Activated B cell treated with CpG ODN at 0.5 μM for 24 hours (primary cell): ENCODE measurements at regions of chr2 and their contacts with region 1.

Region 1: GRCh38 chr2:54673501-54673998 is 49.9 kb upstream of the EML6 start:
- DNase-seq: no peak
- ATAC-seq: peak; percentile 56
- H3K4me3 Mint-ChIP-seq: peak overlapping the region; percentile 64
- H3K27ac Mint-ChIP-seq: peak overlapping the region; percentile 84
- H3K4me1 Mint-ChIP-seq: peaks cover 34% of the 10 kb centered on the region
- H3K27me3 Mint-ChIP-seq: no peaks in the 10 kb centered on the region
- CTCF ChIP-seq: no peak

Region 2: GRCh38 chr2:54691445-54692135 is 18.0 kb after region 1 on chr2:
- CTCF ChIA-PET with region 1: no interaction called
- POLR2A ChIA-PET with region 1: interaction called, 3 read pairs
- intact Hi-C with region 1: loop called (anchors 2 kb)
- DNase-seq: no peak
- ATAC-seq: no peak
- H3K4me3 Mint-ChIP-seq: no peak overlapping the region
- H3K27ac Mint-ChIP-seq: no peak overlapping the region
- H3K4me1 Mint-ChIP-seq: no peaks in the 10 kb centered on the region
- H3K27me3 Mint-ChIP-seq: peaks cover 3% of the 10 kb centered on the region
- CTCF ChIP-seq: no peak

Region 3: GRCh38 chr2:54716375-54716774 is 42.8 kb after region 1 on chr2:
- CTCF ChIA-PET with region 1: no interaction called
- POLR2A ChIA-PET with region 1: no interaction called
- intact Hi-C with region 1: no loop called
- DNase-seq: no peak
- ATAC-seq: no peak
- H3K4me3 Mint-ChIP-seq: no peak overlapping the region
- H3K27ac Mint-ChIP-seq: no peak overlapping the region
- H3K4me1 Mint-ChIP-seq: no peaks in the 10 kb centered on the region
- H3K27me3 Mint-ChIP-seq: peaks cover 11% of the 10 kb centered on the region
- CTCF ChIP-seq: no peak

Region 4: GRCh38 chr2:54735636-54736035 is 62.1 kb after region 1 on chr2:
- CTCF ChIA-PET with region 1: no interaction called
- POLR2A ChIA-PET with region 1: no interaction called
- intact Hi-C with region 1: no loop called
- DNase-seq: no peak
- ATAC-seq: no peak
- H3K4me3 Mint-ChIP-seq: no peak overlapping the region
- H3K27ac Mint-ChIP-seq: no peak overlapping the region
- H3K4me1 Mint-ChIP-seq: peaks cover 7% of the 10 kb centered on the region
- H3K27me3 Mint-ChIP-seq: peaks cover 2% of the 10 kb centered on the region
- CTCF ChIP-seq: no peak

Region 5: GRCh38 chr2:54773838-54774237 is 100.3 kb after region 1 on chr2:
- CTCF ChIA-PET with region 1: no interaction called
- POLR2A ChIA-PET with region 1: no interaction called
- intact Hi-C with region 1: no loop called
- DNase-seq: no peak
- ATAC-seq: no peak
- H3K4me3 Mint-ChIP-seq: no peak overlapping the region
- H3K27ac Mint-ChIP-seq: no peak overlapping the region
- H3K4me1 Mint-ChIP-seq: peaks cover 4% of the 10 kb centered on the region
- H3K27me3 Mint-ChIP-seq: no peaks in the 10 kb centered on the region
- CTCF ChIP-seq: no peak

Region 6: GRCh38 chr2:54803783-54804751 is 130.5 kb after region 1 on chr2:
- CTCF ChIA-PET with region 1: no interaction called
- POLR2A ChIA-PET with region 1: no interaction called
- intact Hi-C with region 1: no loop called
- DNase-seq: no peak
- ATAC-seq: no peak
- H3K4me3 Mint-ChIP-seq: no peak overlapping the region
- H3K27ac Mint-ChIP-seq: no peak overlapping the region
- H3K4me1 Mint-ChIP-seq: peaks cover 5% of the 10 kb centered on the region
- H3K27me3 Mint-ChIP-seq: no peaks in the 10 kb centered on the region
- CTCF ChIP-seq: no peak